Left cardiac atrium (tissue), 4 donors: ENCODE measurements at regions of chr7 and their contacts with region 1.

Region 1: GRCh38 chr7:131068604-131069021 is 259.1 kb upstream of the MKLN1 start:
- DNase-seq: no peak
- ATAC-seq: no peak

Region 2: GRCh38 chr7:131090886-131091692 is 22.5 kb after region 1 on chr7:
- intact Hi-C with region 1: no loop called
- DNase-seq: no peak
- ATAC-seq: no peak

Region 3: GRCh38 chr7:131424219-131424822 is 355.7 kb after region 1 on chr7:
- intact Hi-C with region 1: loop called (anchors 5 to 10 kb)
- DNase-seq: no peak
- ATAC-seq: peak; percentile 68 to 79